ENCODE measurements at regions of chr21 and their contacts with region 1.

Region 1: GRCh38 chr21:34888569-34889319 is 160.4 kb downstream of the RUNX1 start:
- DNase-seq: peak; percentile 94
- ATAC-seq: peak; percentile 61

Region 2: DNA sequence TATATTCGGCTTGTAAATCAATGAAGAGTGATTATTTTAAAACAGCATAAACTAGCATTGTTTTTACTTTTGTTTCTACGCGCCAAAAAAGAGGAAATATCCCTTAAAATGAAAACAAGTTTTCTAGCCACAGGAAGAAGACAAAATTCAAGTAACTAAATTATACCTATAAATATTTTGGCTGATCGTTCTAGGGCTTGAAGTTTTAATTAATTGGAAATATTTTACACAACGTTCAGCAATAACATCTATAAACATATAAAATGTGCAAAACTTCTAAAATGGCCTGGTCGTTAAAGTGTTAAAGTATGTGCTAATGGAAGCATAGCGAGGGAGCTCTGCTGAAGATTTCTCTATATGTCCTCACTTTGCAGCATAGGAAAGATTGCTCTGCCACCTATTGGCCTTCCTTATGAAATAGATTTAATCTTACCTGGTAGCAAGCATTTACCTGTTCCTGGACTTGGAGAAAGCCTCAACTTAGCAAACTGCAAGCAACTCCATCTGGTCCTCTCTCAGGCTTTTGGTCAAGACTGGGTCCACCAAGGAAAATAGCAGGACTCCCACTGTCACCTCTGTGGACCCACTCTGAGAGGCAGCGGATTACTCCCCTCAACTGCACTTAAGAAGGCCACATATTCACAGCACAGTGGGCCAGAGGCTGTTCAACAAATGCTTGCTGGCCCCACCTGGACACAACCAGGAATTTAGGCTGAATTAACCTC is 511.7 kb after region 1 on chr21:
- intact Hi-C with region 1: loop called in 1 of 2 experiments (anchors 5 kb)
- DNase-seq: peak in 1 of 2 donors; percentile 7
- ATAC-seq: peak; percentile 99